ENCODE measurements at regions of chrX and their contacts with region 1.

Region 1: GRCh38 chrX:45515262-45516215 is 314.9 kb upstream of the DIPK2B start:
- DNase-seq: peak in 11 of 14 experiments; percentile 1 to 68 (median 14)
- ATAC-seq: no peak
- H3K4me3 ChIP-seq: no peak overlapping the region
- H3K4me3 Mint-ChIP-seq: no peak overlapping the region
- H3K27ac ChIP-seq: no peak overlapping the region
- H3K27ac Mint-ChIP-seq: no peak overlapping the region
- H3K4me1 ChIP-seq: no peaks in the 10 kb centered on the region
- H3K4me1 Mint-ChIP-seq: peaks cover 4% of the 10 kb centered on the region
- H3K27me3 ChIP-seq: no peaks in the 10 kb centered on the region
- H3K27me3 Mint-ChIP-seq: no peaks in the 10 kb centered on the region
- CTCF ChIP-seq: peak; percentile 52

Region 2: DNA sequence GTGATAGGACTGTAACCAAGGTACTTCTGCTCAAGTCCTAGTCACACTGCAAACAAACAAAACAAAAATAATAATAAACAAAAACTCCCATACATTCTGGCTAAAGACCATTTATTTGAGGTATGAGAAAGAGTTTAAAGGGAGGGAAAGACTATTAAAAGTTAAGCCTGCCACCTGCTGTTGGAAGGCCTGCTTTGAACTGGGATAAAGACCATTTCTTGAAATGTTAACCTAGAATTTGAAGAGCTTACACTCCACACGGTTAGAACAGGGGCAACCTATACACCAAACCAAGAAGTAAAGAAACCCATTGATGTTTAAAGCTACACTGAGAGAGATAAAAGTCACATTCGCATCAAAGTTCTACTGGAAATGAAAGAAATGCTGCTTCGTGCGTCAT is 233.8 kb after region 1 on chrX:
- CTCF ChIA-PET with region 1: no interaction called
- POLR2A ChIA-PET with region 1: no interaction called
- intact Hi-C with region 1: loop called in 1 of 2 experiments (anchors 5 kb)
- DNase-seq: peak in 2 of 14 experiments; percentile 41 to 45
- ATAC-seq: peak; percentile 67
- H3K4me3 ChIP-seq: no peak overlapping the region
- H3K4me3 Mint-ChIP-seq: no peak overlapping the region
- H3K27ac ChIP-seq: no peak overlapping the region
- H3K27ac Mint-ChIP-seq: peak overlapping the region; percentile 80
- H3K4me1 ChIP-seq: peaks cover 17% of the 10 kb centered on the region
- H3K4me1 Mint-ChIP-seq: peaks cover 23% of the 10 kb centered on the region
- H3K27me3 ChIP-seq: no peaks in the 10 kb centered on the region
- H3K27me3 Mint-ChIP-seq: no peaks in the 10 kb centered on the region
- CTCF ChIP-seq: no peak

Region 3: GRCh38 chrX:45806410-45807121 is 291.0 kb after region 1 on chrX:
- CTCF ChIA-PET with region 1: no interaction called
- POLR2A ChIA-PET with region 1: no interaction called
- intact Hi-C with region 1: no loop called
- DNase-seq: peak in 12 of 14 experiments; percentile 7 to 87 (median 35)
- ATAC-seq: peak; percentile 84
- H3K4me3 ChIP-seq: peak overlapping the region; percentile 50
- H3K4me3 Mint-ChIP-seq: peak overlapping the region; percentile 90
- H3K27ac ChIP-seq: peak overlapping the region; percentile 67 to 82
- H3K27ac Mint-ChIP-seq: peak overlapping the region; percentile 93
- H3K4me1 ChIP-seq: peaks cover 24% of the 10 kb centered on the region
- H3K4me1 Mint-ChIP-seq: peaks cover 74% of the 10 kb centered on the region
- H3K27me3 ChIP-seq: no peaks in the 10 kb centered on the region
- H3K27me3 Mint-ChIP-seq: no peaks in the 10 kb centered on the region
- CTCF ChIP-seq: no peak

Region 4: GRCh38 chrX:45843518-45843917 is 328.0 kb after region 1 on chrX:
- CTCF ChIA-PET with region 1: interaction called, 5 read pairs
- POLR2A ChIA-PET with region 1: no interaction called
- intact Hi-C with region 1: loop called in 1 of 2 experiments (anchors 2 kb)
- DNase-seq: peak in 5 of 14 experiments; percentile 6 to 55 (median 45)
- ATAC-seq: peak; percentile 63
- H3K4me3 ChIP-seq: no peak overlapping the region
- H3K4me3 Mint-ChIP-seq: no peak overlapping the region
- H3K27ac ChIP-seq: no peak overlapping the region
- H3K27ac Mint-ChIP-seq: no peak overlapping the region
- H3K4me1 ChIP-seq: peaks cover 8% of the 10 kb centered on the region
- H3K4me1 Mint-ChIP-seq: peaks cover 24% of the 10 kb centered on the region
- H3K27me3 ChIP-seq: no peaks in the 10 kb centered on the region
- H3K27me3 Mint-ChIP-seq: no peaks in the 10 kb centered on the region
- CTCF ChIP-seq: peak; percentile 37

Region 5: GRCh38 chrX:46376246-46376885 is 860.8 kb after region 1 on chrX:
- CTCF ChIA-PET with region 1: interaction called, 3 read pairs
- POLR2A ChIA-PET with region 1: no interaction called
- intact Hi-C with region 1: loop called in 1 of 2 experiments (anchors 10 kb)
- DNase-seq: peak in 7 of 14 experiments; percentile 3 to 53 (median 25)
- ATAC-seq: peak; percentile 55
- H3K4me3 ChIP-seq: no peak overlapping the region
- H3K4me3 Mint-ChIP-seq: no peak overlapping the region
- H3K27ac ChIP-seq: no peak overlapping the region
- H3K27ac Mint-ChIP-seq: no peak overlapping the region
- H3K4me1 ChIP-seq: no peaks in the 10 kb centered on the region
- H3K4me1 Mint-ChIP-seq: no peaks in the 10 kb centered on the region
- H3K27me3 ChIP-seq: no peaks in the 10 kb centered on the region
- H3K27me3 Mint-ChIP-seq: no peaks in the 10 kb centered on the region
- CTCF ChIP-seq: peak; percentile 25

Region 6: GRCh38 chrX:46408553-46409407 is 893.2 kb after region 1 on chrX:
- CTCF ChIA-PET with region 1: interaction called, 5 read pairs
- POLR2A ChIA-PET with region 1: interaction called, 6 read pairs
- intact Hi-C with region 1: loop called (anchors 2 to 10 kb)
- DNase-seq: peak; percentile 44 to 79 (median 55)
- ATAC-seq: no peak
- H3K4me3 ChIP-seq: no peak overlapping the region
- H3K4me3 Mint-ChIP-seq: no peak overlapping the region
- H3K27ac ChIP-seq: no peak overlapping the region
- H3K27ac Mint-ChIP-seq: no peak overlapping the region
- H3K4me1 ChIP-seq: no peaks in the 10 kb centered on the region
- H3K4me1 Mint-ChIP-seq: peaks cover 5% of the 10 kb centered on the region
- H3K27me3 ChIP-seq: no peaks in the 10 kb centered on the region
- H3K27me3 Mint-ChIP-seq: no peaks in the 10 kb centered on the region
- CTCF ChIP-seq: peak; percentile 73